Activated CD4-positive, alpha-beta memory T cell treated with anti-CD3 and anti-CD28 coated beads, Interleukin-2, amount 10 ng/mL, durations not matched to agents 7 days and 5 days (primary cell): ENCODE measurements at regions of chr1 and their contacts with region 1.

Region 1: GRCh38 chr1:154386643-154387352 is 18.3 kb upstream of the IL6R start:
- DNase-seq: peak; percentile 48
- H3K4me3 Mint-ChIP-seq: peak overlapping the region; percentile 67
- H3K27ac Mint-ChIP-seq: peak overlapping the region; percentile 84
- H3K4me1 Mint-ChIP-seq: peaks cover 32% of the 10 kb centered on the region
- H3K27me3 Mint-ChIP-seq: peaks cover 1% of the 10 kb centered on the region

Region 2: GRCh38 chr1:154398141-154398540 is 11.3 kb after region 1 on chr1:
- CTCF ChIA-PET with region 1: interaction called, 9 read pairs
- POLR2A ChIA-PET with region 1: interaction called, 22 read pairs
- DNase-seq: no peak
- H3K4me3 Mint-ChIP-seq: no peak overlapping the region
- H3K27ac Mint-ChIP-seq: peak overlapping the region; percentile 65
- H3K4me1 Mint-ChIP-seq: peaks cover 33% of the 10 kb centered on the region
- H3K27me3 Mint-ChIP-seq: peaks cover 5% of the 10 kb centered on the region

Region 3: DNA sequence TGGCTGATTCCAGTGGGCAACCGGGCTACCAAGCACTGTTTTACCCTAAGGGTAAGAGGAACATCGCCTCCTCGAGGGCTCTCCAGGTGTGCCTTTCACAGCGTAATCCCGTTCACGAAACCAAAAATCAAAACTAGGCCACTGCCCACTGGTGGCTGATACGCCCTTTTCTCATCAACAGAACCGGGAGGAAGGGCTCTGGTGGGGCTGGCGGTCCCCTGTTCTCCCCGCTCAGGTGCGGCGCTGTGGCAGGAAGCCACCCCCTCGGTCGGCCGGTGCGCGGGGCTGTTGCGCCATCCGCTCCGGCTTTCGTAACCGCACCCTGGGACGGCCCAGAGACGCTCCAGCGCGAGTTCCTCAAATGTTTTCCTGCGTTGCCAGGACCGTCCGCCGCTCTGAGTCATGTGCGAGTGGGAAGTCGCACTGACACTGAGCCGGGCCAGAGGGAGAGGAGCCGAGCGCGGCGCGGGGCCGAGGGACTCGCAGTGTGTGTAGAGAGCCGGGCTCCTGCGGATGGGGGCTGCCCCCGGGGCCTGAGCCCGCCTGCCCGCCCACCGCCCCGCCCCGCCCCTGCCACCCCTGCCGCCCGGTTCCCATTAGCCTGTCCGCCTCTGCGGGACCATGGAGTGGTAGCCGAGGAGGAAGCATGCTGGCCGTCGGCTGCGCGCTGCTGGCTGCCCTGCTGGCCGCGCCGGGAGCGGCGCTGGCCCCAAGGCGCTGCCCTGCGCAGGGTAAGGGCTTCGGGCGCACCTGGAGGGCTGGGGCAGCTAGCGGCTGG is 18.4 kb after region 1 on chr1 and contains the start of gene IL6R:
- CTCF ChIA-PET with region 1: interaction called, 9 read pairs
- POLR2A ChIA-PET with region 1: interaction called, 22 read pairs
- DNase-seq: peak; percentile 74
- H3K4me3 Mint-ChIP-seq: peak within 1 kb of the TSS; percentile 77
- H3K27ac Mint-ChIP-seq: peak within 1 kb of the TSS; percentile 88
- H3K4me1 Mint-ChIP-seq: peaks cover 83% of the 10 kb centered on the region
- H3K27me3 Mint-ChIP-seq: peaks cover 19% of the 10 kb centered on the region
- total RNA-seq, gene IL6R: 15.7 to 16.0 TPM